GM12878 (cell line): ENCODE measurements at regions of chr2 and their contacts with region 1.

Region 1: GRCh38 chr2:69755862-69756467 is 14.0 kb downstream of the ANXA4 start:
- DNase-seq: no peak
- ATAC-seq: peak; percentile 90
- H3K4me3 ChIP-seq: no peak overlapping the region
- H3K27ac ChIP-seq: no peak overlapping the region
- H3K4me1 ChIP-seq: peaks cover 7% of the 10 kb centered on the region
- H3K27me3 ChIP-seq: no peaks in the 10 kb centered on the region
- CTCF ChIP-seq: no peak
- EP300 ChIP-seq: no peak
- POLR2A ChIP-seq: no peak
- RAD21 ChIP-seq: no peak

Region 2: DNA sequence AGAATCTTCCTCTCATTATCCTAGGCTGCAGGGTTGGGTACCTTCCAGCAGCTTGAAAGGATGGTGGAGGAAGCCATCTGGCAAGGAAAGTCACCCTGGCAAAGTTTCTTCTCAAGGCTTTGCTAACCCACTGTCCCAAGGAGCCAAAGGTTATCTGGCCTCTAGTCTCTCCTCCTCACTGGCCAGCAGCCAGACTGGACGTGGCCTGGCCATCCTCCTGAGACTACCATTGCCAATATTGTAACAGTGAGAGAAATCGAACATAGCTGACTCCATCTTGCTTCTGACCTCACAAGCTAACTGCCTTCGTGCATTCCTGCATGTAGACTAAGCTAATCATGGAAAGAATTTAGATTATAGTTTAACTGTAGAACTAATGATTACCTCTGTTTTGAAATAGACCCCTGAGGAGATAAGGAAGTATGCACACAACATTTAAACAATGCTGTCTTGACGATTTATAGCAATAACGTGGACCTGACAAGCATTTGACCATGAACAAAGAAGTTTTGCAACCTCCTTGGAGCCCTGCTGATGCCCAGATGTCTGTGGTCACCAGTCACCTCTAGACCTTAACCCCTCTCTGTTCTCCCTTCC is 21.8 kb before region 1 on chr2:
- CTCF ChIA-PET with region 1: interaction called, 3 read pairs
- POLR2A ChIA-PET with region 1: interaction called, 27 read pairs
- RAD21 ChIA-PET with region 1: interaction called, 6 read pairs
- SMC1A ChIA-PET with region 1: interaction called, 10 read pairs
- in situ Hi-C with region 1: no loop called
- intact Hi-C with region 1: no loop called
- DNase-seq: no peak
- ATAC-seq: no peak
- H3K4me3 ChIP-seq: no peak overlapping the region
- H3K27ac ChIP-seq: no peak overlapping the region
- H3K4me1 ChIP-seq: peaks cover 20% of the 10 kb centered on the region
- H3K27me3 ChIP-seq: no peaks in the 10 kb centered on the region
- CTCF ChIP-seq: no peak
- EP300 ChIP-seq: no peak
- POLR2A ChIP-seq: no peak
- RAD21 ChIP-seq: no peak

Region 3: DNA sequence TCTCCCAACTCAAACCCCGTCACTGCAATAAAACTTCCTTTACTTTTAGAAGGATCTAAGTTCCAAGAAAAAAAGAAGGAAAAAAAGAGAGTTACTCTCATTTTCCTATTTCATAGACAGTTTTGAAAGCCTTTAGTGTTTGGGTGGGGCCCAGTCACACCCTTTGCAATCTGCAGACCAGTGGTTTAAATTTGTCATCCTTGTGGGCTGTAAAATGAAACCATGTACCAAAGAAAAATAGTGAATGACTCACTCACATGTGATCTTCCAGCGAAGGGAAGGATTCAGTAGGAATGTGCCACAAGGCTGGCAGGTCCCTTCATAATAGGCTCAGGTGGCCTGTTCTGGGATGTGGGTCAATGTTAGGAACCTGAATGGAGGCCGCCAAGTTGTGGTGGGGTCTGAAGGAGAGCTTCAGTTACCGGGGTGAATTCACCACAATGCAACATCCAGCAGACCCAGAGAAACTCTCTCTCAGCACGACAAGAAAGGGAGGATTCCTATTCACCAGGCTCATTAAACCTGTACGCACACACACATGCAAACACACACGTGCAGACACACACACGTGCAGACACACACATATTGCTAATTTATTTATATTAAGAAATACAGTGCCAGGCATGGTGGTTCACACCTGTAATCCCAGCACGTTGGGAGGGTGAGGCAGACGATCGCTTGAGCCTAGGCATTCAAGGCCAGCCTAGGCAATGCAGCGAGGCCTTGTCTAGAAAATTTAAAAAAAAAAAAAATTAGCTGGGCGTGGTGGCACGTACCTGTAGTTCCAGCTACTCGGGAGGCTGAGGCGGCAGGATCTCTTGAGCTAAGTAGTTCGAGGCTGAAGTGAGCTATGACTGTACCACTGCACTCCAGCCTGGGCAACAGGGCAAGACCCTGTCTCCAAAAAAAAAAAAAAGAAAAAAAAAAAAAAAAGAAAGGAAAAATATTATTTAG is 14.5 kb after region 1 on chr2:
- CTCF ChIA-PET with region 1: interaction called, 8 read pairs
- POLR2A ChIA-PET with region 1: interaction called, 4 read pairs
- RAD21 ChIA-PET with region 1: interaction called, 20 read pairs
- SMC1A ChIA-PET with region 1: interaction called, 21 read pairs
- in situ Hi-C with region 1: no loop called
- intact Hi-C with region 1: no loop called
- DNase-seq: no peak
- ATAC-seq: peak; percentile 62
- H3K4me3 ChIP-seq: no peak overlapping the region
- H3K27ac ChIP-seq: no peak overlapping the region
- H3K4me1 ChIP-seq: peaks cover 60% of the 10 kb centered on the region
- H3K27me3 ChIP-seq: no peaks in the 10 kb centered on the region
- CTCF ChIP-seq: no peak
- EP300 ChIP-seq: no peak
- POLR2A ChIP-seq: no peak
- RAD21 ChIP-seq: no peak

Region 4: GRCh38 chr2:69781321-69782248 is 25.6 kb after region 1 on chr2:
- CTCF ChIA-PET with region 1: interaction called, 3 read pairs
- POLR2A ChIA-PET with region 1: interaction called, 11 read pairs
- RAD21 ChIA-PET with region 1: interaction called, 16 read pairs
- SMC1A ChIA-PET with region 1: interaction called, 7 read pairs
- in situ Hi-C with region 1: no loop called
- intact Hi-C with region 1: no loop called
- DNase-seq: no peak
- ATAC-seq: peak; percentile 88
- H3K4me3 ChIP-seq: 0 out of 2 replicates have a peak overlapping the region, but pooled peaks have one; percentile 21
- H3K27ac ChIP-seq: peak overlapping the region; percentile 42
- H3K4me1 ChIP-seq: peaks cover 14% of the 10 kb centered on the region
- H3K27me3 ChIP-seq: no peaks in the 10 kb centered on the region
- CTCF ChIP-seq: no peak
- EP300 ChIP-seq: no peak
- POLR2A ChIP-seq: no peak
- RAD21 ChIP-seq: no peak